Activated CD4-positive, alpha-beta memory T cell treated with anti-CD3 and anti-CD28 coated beads, Interleukin-2, amount 10 ng/mL, durations not matched to agents 7 days and 5 days (primary cell): ENCODE measurements at regions of chr3 and their contacts with region 1.

Region 1: DNA sequence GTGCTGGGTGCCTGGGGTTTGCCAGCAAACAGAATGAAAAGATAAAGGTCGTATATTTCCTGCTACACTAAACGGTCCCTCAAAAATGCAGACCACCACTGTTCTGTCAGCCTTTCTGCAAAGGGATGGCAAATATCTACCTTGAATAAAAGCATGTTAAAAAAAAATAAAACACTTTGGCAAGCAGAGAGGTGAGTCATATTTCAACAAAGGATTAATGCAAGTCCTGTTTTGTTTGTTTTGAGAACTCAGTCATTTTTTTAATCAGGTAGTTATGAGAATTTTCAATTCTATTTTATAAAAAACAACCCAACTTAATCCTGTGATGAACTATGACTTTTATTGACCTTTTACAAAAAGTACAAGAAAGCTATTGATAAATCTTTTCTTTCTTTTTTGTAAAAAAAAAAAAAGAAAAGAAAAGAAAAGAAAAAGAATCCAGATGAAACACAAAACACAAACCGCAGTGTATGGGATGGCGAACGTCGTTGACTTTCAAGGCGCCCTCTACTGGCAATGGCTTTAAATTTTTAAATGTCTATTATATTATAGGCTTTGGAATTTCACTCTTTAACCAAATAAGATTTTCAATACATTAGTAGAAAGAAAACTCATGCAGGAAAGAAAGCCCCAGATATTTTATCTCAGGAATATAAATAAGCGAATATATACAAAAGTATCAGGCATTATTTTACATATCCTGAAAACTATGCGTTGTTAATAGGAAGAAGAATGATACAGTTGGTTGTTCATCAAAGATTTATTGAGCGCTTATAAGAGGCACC is 87.8 kb downstream of the NCEH1 start:
- DNase-seq: peak; percentile 37
- H3K4me3 Mint-ChIP-seq: no peak overlapping the region
- H3K27ac Mint-ChIP-seq: no peak overlapping the region
- H3K4me1 Mint-ChIP-seq: peaks cover 4% of the 10 kb centered on the region
- H3K27me3 Mint-ChIP-seq: no peaks in the 10 kb centered on the region

Region 2: DNA sequence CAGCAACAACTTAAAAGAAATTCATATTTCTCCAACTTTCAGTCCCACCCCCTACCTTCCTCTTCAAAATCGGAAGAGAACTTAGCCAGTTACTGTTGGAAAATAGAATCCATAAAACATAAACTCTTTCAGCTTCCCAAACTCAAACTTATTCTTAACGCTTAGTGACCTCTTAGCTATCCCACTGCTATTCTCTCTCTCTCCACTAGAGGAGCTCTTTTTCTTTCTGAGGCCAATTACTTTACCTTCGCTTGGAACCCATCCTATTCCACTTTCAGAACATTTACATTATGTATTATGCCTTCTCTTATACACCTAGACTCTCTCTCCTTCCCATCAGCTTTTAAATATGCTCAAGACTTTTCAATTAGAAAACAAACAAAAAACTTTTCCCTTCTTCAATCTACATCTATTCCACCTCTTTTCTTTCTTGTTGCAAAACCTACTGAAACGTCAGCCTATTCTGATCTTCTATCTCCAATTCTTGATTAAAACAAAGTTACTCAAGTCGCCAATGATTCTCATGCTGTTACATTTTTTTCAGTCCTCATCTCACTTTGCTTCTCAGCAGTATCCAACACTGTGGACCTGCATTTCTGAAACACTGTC is 161.5 kb before region 1 on chr3:
- CTCF ChIA-PET with region 1: interaction called, 18 read pairs
- POLR2A ChIA-PET with region 1: no interaction called
- DNase-seq: no peak
- H3K4me3 Mint-ChIP-seq: no peak overlapping the region
- H3K27ac Mint-ChIP-seq: no peak overlapping the region
- H3K4me1 Mint-ChIP-seq: peaks cover 4% of the 10 kb centered on the region
- H3K27me3 Mint-ChIP-seq: peaks cover 4% of the 10 kb centered on the region

Region 3: GRCh38 chr3:172568701-172569100 is 54.4 kb before region 1 on chr3:
- CTCF ChIA-PET with region 1: no interaction called
- POLR2A ChIA-PET with region 1: no interaction called
- DNase-seq: no peak
- H3K4me3 Mint-ChIP-seq: no peak overlapping the region
- H3K27ac Mint-ChIP-seq: no peak overlapping the region
- H3K4me1 Mint-ChIP-seq: peaks cover 21% of the 10 kb centered on the region
- H3K27me3 Mint-ChIP-seq: peaks cover 2% of the 10 kb centered on the region

Region 4: DNA sequence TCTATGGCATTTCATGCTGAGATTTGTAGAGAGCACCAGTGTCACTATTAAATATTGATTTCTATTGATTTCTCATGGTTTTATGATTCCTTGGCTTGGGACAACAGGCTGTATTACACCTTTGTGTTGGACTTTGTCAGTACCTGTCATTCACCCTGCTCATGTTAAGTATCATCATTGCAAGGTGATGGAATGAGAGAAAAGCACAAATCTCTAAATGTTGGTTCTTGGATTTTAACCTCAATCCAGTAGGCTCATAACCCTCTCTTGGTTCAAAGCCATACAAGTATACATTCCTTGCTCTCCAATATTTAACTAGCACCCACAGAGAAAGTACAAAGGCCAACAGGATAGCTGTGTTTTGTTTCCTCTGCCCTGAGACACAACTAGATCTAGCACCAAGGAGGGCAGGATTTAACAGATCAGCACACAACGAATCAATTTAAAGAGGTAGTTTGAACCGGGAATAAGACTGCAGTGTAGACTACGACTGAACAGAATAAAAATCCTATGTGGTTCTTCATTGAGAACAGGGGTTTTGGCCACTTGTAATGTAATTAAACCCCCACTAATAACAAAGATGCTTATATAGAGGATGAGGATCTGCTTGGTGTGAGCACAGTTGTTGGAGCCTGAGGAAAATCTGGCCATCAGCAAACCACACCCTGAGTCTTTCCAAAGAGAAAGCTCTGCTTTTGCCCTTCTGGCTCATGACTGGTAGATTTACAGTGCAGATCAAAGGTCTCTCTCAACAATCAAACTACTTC is 21.9 kb before region 1 on chr3:
- CTCF ChIA-PET with region 1: interaction called, 33 read pairs
- POLR2A ChIA-PET with region 1: no interaction called
- DNase-seq: no peak
- H3K4me3 Mint-ChIP-seq: no peak overlapping the region
- H3K27ac Mint-ChIP-seq: no peak overlapping the region
- H3K4me1 Mint-ChIP-seq: peaks cover 8% of the 10 kb centered on the region
- H3K27me3 Mint-ChIP-seq: no peaks in the 10 kb centered on the region

Region 5: DNA sequence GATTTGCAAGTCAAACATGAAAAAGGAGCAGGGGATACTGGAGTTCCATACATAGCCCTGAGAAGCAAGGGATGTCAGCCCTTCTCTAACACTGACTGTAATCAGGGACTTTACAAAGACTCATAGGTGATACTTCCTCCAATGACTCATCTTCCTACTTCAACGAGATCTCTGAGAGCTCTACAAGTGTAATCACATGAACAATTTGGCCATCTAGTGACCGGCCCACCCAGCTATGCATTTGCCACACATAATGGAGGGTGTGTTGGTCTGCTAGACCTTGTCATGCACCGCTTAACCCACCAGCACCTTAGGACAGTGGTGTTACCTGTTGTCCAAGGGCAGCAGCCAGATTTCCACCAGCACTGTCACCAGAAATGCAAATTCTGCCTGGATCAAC is 12.5 kb after region 1 on chr3:
- CTCF ChIA-PET with region 1: interaction called, 18 read pairs
- POLR2A ChIA-PET with region 1: no interaction called
- DNase-seq: peak; percentile 23
- H3K4me3 Mint-ChIP-seq: no peak overlapping the region
- H3K27ac Mint-ChIP-seq: peak overlapping the region; percentile 57
- H3K4me1 Mint-ChIP-seq: peaks cover 14% of the 10 kb centered on the region
- H3K27me3 Mint-ChIP-seq: no peaks in the 10 kb centered on the region